Endothelial cell of umbilical vein (primary cell): ENCODE measurements at regions of chr18 and their contacts with region 1.

Region 1: DNA sequence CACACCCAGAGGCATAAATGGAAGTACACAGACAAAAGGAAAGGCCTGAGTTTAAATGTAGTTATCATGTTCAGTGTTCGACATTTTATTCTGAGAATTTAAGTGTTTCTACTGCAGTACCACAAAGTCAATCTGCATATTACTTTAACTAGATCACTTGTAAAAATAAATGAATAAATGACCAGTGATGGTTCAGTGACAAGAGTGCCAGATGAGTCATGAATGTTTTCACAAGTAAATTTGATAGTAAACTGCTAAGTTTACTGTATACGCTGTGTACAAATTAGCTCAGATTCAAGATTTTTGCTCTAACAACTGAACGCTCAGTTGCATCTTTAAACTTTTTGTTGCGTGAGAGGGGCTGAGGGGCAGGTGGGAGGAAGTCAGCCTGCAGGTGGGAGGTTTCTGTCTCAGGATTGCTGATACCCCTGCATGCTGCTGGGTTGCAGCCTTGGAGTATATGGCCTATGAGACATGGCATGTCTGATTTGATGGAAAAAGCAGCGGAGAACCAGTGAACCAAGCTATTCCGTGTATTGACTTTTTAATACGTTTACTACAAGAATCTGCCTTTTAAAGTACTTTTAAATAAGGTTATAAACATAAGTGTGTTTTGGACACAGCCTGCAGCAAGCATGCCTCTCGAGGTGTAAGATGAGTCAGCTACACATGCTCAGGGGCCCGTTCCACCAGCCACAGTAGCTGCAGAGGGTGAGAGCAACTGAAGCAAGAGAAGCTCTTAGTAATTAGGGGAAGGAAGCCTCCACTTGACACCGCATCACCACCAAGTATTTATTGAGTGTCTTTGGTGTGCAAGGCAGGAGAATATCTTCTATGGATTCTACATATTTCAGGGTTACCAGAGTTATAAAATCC is 245.1 kb downstream of the NEDD4L start:
- DNase-seq: peak; percentile 68
- H3K4me3 ChIP-seq: no peak overlapping the region
- H3K27ac ChIP-seq: peak overlapping the region; percentile 99
- H3K4me1 ChIP-seq: peaks cover 44% of the 10 kb centered on the region
- H3K27me3 ChIP-seq: no peaks in the 10 kb centered on the region
- CTCF ChIP-seq: no peak
- POLR2A ChIP-seq: no peak

Region 2: DNA sequence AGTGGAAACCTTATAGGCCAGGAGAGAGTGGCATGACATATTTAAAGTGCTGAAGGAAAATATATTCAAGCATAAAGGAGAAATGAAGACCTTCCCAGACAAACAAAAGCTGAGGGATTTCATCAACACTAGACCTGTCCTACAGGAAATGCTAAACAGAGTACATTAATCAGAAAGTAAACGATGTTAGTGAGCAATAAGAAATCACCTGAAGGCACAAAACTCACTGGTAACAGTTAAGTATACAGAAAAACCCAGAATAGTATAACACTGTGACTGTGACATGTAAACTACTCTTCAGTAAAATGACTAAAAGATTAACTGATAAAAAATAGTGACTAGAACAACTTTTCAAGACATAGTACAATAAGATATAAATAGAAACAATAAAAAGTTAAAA is 573.5 kb before region 1 on chr18:
- CTCF ChIA-PET with region 1: no interaction called
- POLR2A ChIA-PET with region 1: no interaction called
- dilution Hi-C with region 1: no loop called
- intact Hi-C with region 1: no loop called
- DNase-seq: no peak
- H3K4me3 ChIP-seq: no peak overlapping the region
- H3K27ac ChIP-seq: no peak overlapping the region
- H3K4me1 ChIP-seq: peaks cover 2% of the 10 kb centered on the region
- H3K27me3 ChIP-seq: no peaks in the 10 kb centered on the region
- CTCF ChIP-seq: no peak
- POLR2A ChIP-seq: no peak

Region 3: DNA sequence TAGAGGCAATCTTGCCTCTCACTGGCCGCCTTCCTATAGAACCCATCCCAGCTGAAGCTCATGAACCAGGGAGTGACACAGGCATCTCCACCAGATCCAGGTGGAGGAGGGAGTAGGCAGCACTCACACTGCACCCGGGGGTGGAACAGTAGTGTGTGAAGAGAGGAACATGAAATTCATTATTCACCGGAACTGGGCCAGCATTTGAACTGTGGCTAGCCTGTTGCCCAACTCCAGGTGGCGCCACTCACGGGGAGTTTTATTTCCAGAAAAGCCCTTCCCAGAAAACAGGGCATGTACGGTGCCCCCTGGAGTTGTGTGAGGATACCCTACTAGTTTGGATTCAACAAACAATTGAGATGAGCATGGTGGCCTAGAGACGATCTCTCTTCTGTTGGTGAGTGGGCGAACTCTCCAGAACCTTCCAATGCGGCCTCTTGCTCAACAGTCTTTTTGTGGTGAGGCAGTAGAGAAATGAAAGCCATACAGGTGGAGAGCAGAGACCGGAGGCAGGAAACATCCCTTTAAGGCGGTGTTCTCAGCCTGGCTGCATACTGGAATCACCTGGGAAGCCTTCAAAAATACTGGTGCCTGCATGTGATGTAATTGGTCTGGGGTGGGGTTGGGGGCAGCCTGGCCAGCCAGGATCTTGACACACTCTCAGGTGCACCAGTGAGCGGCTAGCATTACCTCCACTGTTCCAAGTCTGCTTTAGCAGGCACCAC is 318.6 kb before region 1 on chr18:
- CTCF ChIA-PET with region 1: no interaction called
- POLR2A ChIA-PET with region 1: no interaction called
- dilution Hi-C with region 1: no loop called
- intact Hi-C with region 1: no loop called
- DNase-seq: no peak
- H3K4me3 ChIP-seq: no peak overlapping the region
- H3K27ac ChIP-seq: no peak overlapping the region
- H3K4me1 ChIP-seq: no peaks in the 10 kb centered on the region
- H3K27me3 ChIP-seq: peaks cover 0 to 12% of the 10 kb centered on the region in 2 experiments
- CTCF ChIP-seq: peak; percentile 19 to 25
- POLR2A ChIP-seq: no peak

Region 4: GRCh38 chr18:58080451-58080850 is 208.7 kb before region 1 on chr18:
- CTCF ChIA-PET with region 1: no interaction called
- POLR2A ChIA-PET with region 1: no interaction called
- dilution Hi-C with region 1: no loop called
- intact Hi-C with region 1: no loop called
- DNase-seq: no peak
- H3K4me3 ChIP-seq: no peak overlapping the region
- H3K27ac ChIP-seq: no peak overlapping the region
- H3K4me1 ChIP-seq: no peaks in the 10 kb centered on the region
- H3K27me3 ChIP-seq: peaks cover 0 to 3% of the 10 kb centered on the region in 2 experiments
- CTCF ChIP-seq: no peak
- POLR2A ChIP-seq: no peak

Region 5: DNA sequence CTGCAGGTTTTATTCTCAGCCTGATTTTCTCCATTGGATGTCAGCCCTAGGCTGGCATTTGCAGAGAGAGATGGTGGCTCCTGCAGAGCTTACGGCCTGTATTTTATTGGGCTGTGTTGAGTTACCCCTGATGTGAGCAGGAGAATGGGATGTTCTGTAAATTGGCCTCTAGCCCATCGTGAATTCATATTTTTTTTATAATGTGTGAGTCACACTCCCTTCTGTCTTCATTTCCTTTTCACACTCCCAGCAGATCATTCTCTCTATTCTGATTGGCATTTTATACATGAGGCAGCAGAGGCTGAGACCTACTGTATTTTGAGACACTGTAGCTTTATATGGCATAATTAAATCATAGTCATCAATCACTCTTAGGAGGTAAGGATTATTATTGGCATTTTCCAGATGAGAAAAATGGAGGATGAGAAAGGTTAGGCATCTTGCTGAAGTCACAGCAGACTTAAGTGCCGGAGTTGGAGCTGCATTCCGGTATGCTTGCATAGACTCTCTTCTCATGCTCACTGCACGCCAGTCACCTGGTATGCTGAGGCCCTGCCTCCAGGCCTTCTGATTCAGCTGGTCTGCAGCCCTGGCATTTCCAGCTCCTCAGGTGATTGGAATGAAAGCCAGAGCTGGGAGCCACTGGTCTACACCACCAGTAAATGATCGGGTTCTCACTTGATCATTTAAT is 102.8 kb before region 1 on chr18:
- CTCF ChIA-PET with region 1: interaction called, 4 read pairs
- POLR2A ChIA-PET with region 1: no interaction called
- dilution Hi-C with region 1: no loop called
- intact Hi-C with region 1: loop called (anchors 2 kb)
- DNase-seq: peak; percentile 85
- H3K4me3 ChIP-seq: no peak overlapping the region
- H3K27ac ChIP-seq: peak overlapping the region; percentile 27
- H3K4me1 ChIP-seq: peaks cover 23% of the 10 kb centered on the region
- H3K27me3 ChIP-seq: no peaks in the 10 kb centered on the region
- CTCF ChIP-seq: no peak
- POLR2A ChIP-seq: no peak

Region 6: DNA sequence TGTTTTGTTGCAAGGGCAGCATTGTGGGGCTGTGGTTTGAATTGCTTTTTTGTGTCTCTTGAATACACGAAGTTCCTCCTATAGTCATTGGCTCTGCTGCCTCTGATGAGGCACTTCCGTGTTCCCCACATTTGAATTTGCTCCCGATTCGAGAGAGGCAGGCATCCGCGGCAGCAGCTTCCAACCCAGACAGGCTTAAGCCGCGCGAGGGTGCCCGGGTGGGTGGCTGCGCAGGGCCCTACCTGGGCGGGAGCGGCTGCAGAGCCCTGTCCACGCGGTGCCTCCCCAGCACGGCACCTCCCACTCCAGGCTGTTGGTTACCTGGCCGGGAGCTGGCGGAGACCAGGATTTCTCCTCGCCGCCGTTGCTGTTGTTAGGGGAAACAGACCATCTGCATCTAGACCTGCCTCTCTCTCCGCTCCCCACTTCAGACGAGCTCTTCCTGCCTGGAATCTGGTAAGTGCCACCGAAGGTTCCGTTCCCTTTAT is 93.8 kb before region 1 on chr18:
- CTCF ChIA-PET with region 1: no interaction called
- POLR2A ChIA-PET with region 1: no interaction called
- dilution Hi-C with region 1: no loop called
- intact Hi-C with region 1: loop called (anchors 1 kb)
- DNase-seq: no peak
- H3K4me3 ChIP-seq: peak overlapping the region in 2 of 3 experiments; percentile 5 to 52
- H3K27ac ChIP-seq: peak overlapping the region; percentile 24
- H3K4me1 ChIP-seq: peaks cover 31% of the 10 kb centered on the region
- H3K27me3 ChIP-seq: no peaks in the 10 kb centered on the region
- CTCF ChIP-seq: no peak
- POLR2A ChIP-seq: no peak

Region 7: DNA sequence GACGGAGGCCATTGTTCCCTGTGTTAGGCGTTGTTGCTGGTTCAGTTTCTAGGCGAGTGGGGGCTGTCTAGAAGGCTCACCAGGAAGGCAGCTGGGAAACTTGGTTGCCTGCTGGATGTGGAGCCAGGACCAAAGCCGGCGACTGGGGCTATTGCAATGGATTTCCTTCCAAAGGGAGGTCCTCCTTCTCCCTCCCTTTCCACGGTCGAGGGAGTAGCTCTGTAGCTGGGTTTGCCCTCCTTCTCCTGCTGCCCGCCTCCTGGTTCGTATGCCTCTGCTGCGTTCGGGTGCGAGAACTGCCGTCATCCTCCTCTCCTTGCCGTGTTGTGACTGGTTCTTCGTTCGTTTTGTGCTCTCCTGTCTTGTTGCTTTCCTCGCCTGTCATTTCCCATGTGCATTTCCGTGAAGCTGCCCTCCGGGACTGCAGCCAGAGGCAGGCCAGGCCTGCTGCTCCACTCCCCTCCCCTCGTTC is 41.8 kb before region 1 on chr18:
- CTCF ChIA-PET with region 1: no interaction called
- POLR2A ChIA-PET with region 1: no interaction called
- dilution Hi-C with region 1: no loop called
- intact Hi-C with region 1: loop called (anchors 1 kb)
- DNase-seq: peak; percentile 83
- H3K4me3 ChIP-seq: peak overlapping the region in 2 of 3 experiments; percentile 4 to 20
- H3K27ac ChIP-seq: peak overlapping the region; percentile 64
- H3K4me1 ChIP-seq: peaks cover 29% of the 10 kb centered on the region
- H3K27me3 ChIP-seq: no peaks in the 10 kb centered on the region
- CTCF ChIP-seq: no peak
- POLR2A ChIP-seq: no peak

Region 8: GRCh38 chr18:58263055-58263957 is 25.9 kb before region 1 on chr18:
- CTCF ChIA-PET with region 1: interaction called, 6 read pairs
- POLR2A ChIA-PET with region 1: no interaction called
- dilution Hi-C with region 1: no loop called
- intact Hi-C with region 1: loop called (anchors 1 kb)
- DNase-seq: peak; percentile 86
- H3K4me3 ChIP-seq: peak overlapping the region in 2 of 3 experiments; percentile 7 to 50
- H3K27ac ChIP-seq: peak overlapping the region; percentile 88
- H3K4me1 ChIP-seq: peaks cover 22% of the 10 kb centered on the region
- H3K27me3 ChIP-seq: no peaks in the 10 kb centered on the region
- CTCF ChIP-seq: no peak
- POLR2A ChIP-seq: no peak

Region 9: DNA sequence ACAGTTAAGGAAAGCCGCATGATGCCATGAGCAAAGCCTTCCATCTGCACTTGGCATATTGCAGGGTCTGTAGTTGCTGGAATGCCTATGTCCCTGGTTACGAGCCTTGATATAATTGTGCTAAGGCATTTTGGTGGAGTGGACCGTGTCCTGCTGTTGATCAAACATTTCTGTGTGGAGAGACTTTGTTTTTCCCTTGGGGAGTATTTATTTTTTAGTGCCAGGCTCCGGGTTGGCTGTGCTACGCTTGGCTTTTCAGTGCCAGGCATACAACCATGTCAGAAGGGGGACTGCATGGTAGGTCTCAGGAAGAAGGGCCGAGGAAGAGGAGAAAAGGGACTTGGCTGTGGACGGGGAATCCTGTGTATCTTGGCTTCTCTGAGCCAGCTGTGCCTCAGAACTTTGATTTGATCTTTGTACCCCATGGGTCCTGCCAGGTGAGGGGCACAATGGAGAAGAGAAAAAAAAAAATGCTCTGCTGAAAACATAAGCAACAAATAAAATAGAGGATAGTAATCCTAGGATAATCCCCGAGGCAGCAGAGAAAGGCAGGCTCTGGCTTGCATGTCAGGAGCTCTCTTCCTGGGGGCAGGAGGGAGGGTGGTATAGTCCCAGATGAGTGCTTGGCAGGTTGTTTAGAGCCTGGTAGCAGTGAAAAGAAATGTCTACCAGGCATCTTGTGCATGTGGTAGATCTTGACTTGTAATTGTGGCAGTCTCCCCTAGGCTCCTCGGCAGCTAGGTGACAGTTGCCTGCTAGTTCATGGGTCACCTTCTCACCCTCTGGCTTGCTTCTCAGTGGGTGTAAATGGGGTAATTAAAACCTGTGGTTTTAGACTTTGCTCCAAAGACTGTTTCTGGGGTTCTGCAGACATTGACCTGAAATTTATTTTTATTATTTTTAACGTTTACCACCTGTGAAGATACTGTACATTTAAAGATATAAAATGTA is 12.1 kb before region 1 on chr18:
- CTCF ChIA-PET with region 1: interaction called, 3 read pairs
- POLR2A ChIA-PET with region 1: no interaction called
- dilution Hi-C with region 1: no loop called
- intact Hi-C with region 1: loop called (anchors 2 kb)
- DNase-seq: no peak
- H3K4me3 ChIP-seq: no peak overlapping the region
- H3K27ac ChIP-seq: no peak overlapping the region
- H3K4me1 ChIP-seq: peaks cover 11% of the 10 kb centered on the region
- H3K27me3 ChIP-seq: no peaks in the 10 kb centered on the region
- CTCF ChIP-seq: no peak
- POLR2A ChIP-seq: no peak

Region 10: GRCh38 chr18:58314284-58314683 is 25.1 kb after region 1 on chr18:
- CTCF ChIA-PET with region 1: interaction called, 5 read pairs
- POLR2A ChIA-PET with region 1: no interaction called
- dilution Hi-C with region 1: no loop called
- intact Hi-C with region 1: loop called (anchors 1 kb)
- DNase-seq: peak; percentile 36
- H3K4me3 ChIP-seq: no peak overlapping the region
- H3K27ac ChIP-seq: peak overlapping the region; percentile 79
- H3K4me1 ChIP-seq: peaks cover 33% of the 10 kb centered on the region
- H3K27me3 ChIP-seq: no peaks in the 10 kb centered on the region
- CTCF ChIP-seq: no peak
- POLR2A ChIP-seq: no peak

Region 11: DNA sequence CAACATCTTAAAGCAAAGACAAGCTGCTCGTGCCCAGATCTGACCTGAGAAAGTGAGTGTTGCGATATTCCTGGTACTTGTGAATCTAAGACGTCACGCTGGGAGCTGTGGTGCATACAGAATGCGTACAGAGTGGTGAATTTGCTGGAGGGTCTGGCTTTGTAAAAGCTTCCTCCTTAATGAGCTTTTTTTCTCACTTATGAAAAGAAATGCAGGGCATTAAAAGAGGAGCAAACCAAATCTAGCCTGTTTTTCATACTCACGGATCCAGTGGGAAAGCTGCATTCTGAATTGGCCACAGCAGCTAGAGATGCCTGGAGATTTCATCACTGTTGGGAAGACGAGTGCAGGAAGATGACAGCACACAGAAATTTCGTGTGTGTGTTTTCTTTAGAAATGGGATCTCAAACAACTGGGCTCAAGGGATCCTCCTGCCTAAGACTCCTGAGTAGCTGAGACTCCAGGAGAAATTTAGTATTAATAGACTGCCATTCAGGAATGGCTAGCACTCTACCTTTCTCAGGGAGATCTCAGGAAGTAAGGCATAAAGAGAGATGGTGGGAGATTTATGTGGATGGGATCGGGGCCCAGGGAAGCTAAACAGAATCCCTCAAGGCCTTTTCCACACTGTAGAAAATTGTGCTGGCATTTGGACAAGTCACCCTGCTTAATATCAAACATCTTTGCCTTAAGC is 158.4 kb after region 1 on chr18:
- CTCF ChIA-PET with region 1: no interaction called
- POLR2A ChIA-PET with region 1: no interaction called
- dilution Hi-C with region 1: no loop called
- intact Hi-C with region 1: no loop called
- DNase-seq: no peak
- H3K4me3 ChIP-seq: no peak overlapping the region
- H3K27ac ChIP-seq: no peak overlapping the region
- H3K4me1 ChIP-seq: no peaks in the 10 kb centered on the region
- H3K27me3 ChIP-seq: peaks cover 2 to 10% of the 10 kb centered on the region in 2 experiments
- CTCF ChIP-seq: no peak
- POLR2A ChIP-seq: no peak